PC-9 (cell line): ENCODE measurements at regions of chr5 and their contacts with region 1.

Region 1: DNA sequence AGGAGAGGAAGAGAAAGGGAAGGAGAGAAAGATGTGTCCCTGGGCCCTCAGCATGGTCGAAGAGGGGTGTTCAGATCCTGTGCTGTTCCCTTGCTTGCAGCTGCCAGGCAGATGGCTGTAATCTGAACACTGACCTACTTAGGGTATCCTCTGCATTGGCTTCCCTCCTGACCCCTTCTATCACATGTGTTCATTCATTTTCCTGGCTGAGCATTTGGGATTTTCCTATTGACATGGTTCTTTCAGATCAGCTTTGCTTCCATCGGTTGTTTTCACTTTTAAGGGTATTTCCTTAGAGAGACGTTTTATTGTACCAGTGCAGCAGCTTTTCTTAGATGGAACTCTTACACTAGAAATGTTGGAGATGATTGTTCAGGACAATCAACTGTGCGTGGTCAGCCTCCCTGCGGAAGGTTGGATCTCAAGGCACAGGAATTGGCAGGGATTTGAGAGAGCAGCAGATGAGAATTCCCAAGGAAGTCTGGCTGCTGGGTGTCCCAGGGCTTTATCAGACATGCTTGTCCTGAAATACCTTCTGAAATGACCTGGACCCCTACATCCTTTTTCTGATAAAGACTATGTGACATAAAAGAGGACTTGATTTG is 26.0 kb downstream of the ACTBL2 start:
- DNase-seq: no peak
- H3K4me3 ChIP-seq: no peak overlapping the region
- H3K27ac ChIP-seq: no peak overlapping the region
- H3K4me1 ChIP-seq: no peaks in the 10 kb centered on the region
- H3K27me3 ChIP-seq: no peaks in the 10 kb centered on the region
- CTCF ChIP-seq: no peak

Region 2: DNA sequence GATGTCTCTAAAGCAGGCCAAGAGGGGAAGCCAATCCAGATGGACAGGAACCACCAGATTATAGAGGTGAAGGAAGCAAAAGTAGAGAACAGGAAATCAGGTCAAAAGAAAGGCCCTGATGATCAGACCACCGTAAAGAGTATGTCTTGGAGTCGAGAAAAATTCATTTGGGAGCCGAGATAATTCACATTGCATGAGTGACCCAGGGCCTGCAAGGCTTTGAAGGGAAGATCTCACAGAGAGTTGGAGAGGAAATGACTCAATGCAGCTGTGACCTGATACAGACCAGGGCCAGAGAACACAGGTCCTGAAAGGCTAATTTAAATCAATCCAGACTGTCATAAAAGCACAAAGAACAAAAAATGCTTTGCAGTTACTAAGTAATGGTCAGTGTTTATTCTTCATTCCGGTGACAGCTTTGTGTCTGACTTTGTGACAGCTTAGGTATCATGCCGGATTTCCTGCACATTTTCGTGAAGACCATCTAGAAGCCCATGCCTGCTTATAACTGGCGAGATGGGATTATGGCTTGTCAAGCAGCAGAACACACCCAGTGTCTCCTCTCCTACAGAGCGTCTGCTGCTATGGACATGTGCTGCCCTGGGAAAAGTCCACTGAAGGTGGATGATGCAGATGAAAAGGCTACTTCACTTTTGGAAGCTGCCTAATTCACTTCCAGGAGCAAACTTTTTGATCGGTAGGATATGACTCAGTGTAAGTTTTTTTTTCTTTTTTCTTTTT is 31.8 kb after region 1 on chr5:
- CTCF ChIA-PET with region 1: no interaction called
- POLR2A ChIA-PET with region 1: no interaction called
- intact Hi-C with region 1: no loop called
- DNase-seq: no peak
- H3K4me3 ChIP-seq: no peak overlapping the region
- H3K27ac ChIP-seq: no peak overlapping the region
- H3K4me1 ChIP-seq: peaks cover 16% of the 10 kb centered on the region; the same call in 1 of the 2 replicates
- H3K27me3 ChIP-seq: no peaks in the 10 kb centered on the region
- CTCF ChIP-seq: no peak

Region 3: GRCh38 chr5:58961631-58962280 is 1505.1 kb after region 1 on chr5:
- CTCF ChIA-PET with region 1: no interaction called
- POLR2A ChIA-PET with region 1: interaction called, 10 read pairs
- intact Hi-C with region 1: no loop called
- DNase-seq: no peak
- H3K4me3 ChIP-seq: no peak overlapping the region
- H3K27ac ChIP-seq: no peak overlapping the region
- H3K4me1 ChIP-seq: no peaks in the 10 kb centered on the region
- H3K27me3 ChIP-seq: peaks cover 4% of the 10 kb centered on the region; the same call in 1 of the 2 replicates
- CTCF ChIP-seq: no peak